ENCODE measurements at regions of chr17 and their contacts with region 1.

Region 1: GRCh38 chr17:7296189-7296902 is 1.9 kb upstream of the YBX2 start:
- DNase-seq: peak; percentile 88 to 96
- ATAC-seq: peak; percentile 92
- H3K4me3 ChIP-seq: no peak overlapping the region
- H3K27ac ChIP-seq: no peak overlapping the region
- H3K4me1 ChIP-seq: no peaks in the 10 kb centered on the region
- H3K27me3 ChIP-seq: peaks cover 0 to 2% of the 10 kb centered on the region in 2 donors

Region 2: GRCh38 chr17:7029659-7030058 is 266.7 kb before region 1 on chr17:
- intact Hi-C with region 1: no loop called
- DNase-seq: no peak
- ATAC-seq: no peak
- H3K4me3 ChIP-seq: no peak overlapping the region
- H3K27ac ChIP-seq: no peak overlapping the region
- H3K4me1 ChIP-seq: no peaks in the 10 kb centered on the region
- H3K27me3 ChIP-seq: no peaks in the 10 kb centered on the region

Region 3: DNA sequence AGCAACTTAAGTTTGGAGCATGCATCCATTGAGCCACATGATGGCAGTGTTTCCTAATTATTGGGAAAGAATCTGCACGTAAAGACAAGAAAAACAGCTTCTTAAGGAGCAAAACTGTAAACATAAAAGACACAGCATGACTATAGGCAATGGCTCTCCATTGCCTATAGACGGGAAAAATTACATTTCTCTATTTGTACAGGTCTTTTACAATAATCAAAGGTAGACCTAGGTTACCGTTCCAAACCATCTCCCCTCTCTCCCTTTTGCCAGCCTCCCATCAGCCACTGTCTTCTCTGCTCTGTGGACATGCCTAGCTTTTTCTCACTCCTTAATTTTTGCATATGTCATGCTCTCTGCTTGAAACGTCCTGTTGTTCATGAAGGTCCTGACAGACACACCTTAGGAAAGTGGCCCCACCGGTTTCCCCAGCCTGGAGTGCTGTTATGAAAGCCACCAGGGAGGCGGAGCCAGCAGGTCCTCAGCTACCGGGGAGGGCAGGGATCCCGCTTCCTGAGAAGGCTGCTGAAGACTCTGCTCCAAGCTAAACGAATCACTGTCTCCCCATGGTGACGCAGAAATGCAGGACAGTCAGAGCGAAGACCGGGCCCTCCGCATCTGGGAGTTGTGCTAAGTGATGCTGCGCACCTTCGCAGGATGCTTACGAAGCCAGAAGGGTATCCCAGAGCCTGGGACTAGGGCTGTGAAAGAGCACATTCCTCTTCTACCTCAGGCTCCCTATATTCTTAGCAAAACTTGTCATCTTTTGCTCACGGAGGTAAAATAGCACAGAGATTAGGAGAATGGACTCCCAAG is 250.2 kb before region 1 on chr17:
- intact Hi-C with region 1: loop called in 1 of 2 experiments (anchors 10 kb)
- DNase-seq: no peak
- ATAC-seq: no peak
- H3K4me3 ChIP-seq: no peak overlapping the region
- H3K27ac ChIP-seq: no peak overlapping the region
- H3K4me1 ChIP-seq: no peaks in the 10 kb centered on the region
- H3K27me3 ChIP-seq: no peaks in the 10 kb centered on the region

Region 4: DNA sequence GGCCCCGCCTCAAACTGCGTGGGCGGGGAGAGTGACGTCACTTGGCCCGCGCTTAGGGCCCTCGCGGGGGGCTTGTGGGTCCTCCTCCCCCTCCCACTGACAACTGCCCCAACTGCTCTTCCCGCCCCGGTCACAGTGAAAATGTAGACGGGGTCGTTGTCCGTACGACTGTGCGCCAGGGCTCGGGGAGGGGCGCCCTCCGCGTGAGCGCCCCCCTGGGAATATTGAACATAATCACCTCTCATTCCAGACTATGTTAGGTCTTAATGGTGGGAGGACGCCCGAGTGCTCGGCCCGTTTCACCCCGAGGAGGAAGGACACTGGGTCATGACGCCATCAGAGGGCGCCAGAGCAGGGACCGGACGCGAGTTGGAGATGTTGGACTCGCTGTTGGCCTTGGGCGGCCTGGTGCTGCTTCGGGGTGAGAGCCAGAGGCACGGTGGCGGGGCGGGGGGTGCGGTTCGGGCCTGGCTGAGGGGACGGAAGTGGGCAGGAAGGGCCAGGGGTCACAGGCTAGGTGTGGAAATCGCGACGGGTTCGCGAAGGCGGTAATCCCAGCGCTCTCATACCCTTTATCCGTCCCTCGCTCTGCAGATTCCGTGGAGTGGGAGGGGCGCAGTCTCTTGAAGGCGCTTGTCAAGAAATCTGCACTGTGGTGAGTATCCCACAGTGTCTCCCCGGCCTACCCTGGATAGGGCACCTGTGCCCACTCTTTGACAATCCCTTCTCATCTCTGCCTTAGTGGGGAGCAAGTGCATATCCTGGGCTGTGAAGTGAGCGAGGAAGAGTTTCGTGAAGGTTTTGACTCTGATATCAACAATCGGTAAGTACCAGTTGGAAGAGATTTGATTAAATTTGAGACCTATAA is 43.9 kb before region 1 on chr17 and contains the start of gene ELP5:
- intact Hi-C with region 1: loop called in 1 of 2 experiments (anchors 5 kb)
- DNase-seq: peak; percentile 97 to 99
- ATAC-seq: peak; percentile 92
- H3K4me3 ChIP-seq: peak within 1 kb of the TSS; percentile 98 to 99
- H3K27ac ChIP-seq: peak within 1 kb of the TSS; percentile 71 to 94
- H3K4me1 ChIP-seq: peaks cover 0 to 2% of the 10 kb centered on the region in 2 donors
- H3K27me3 ChIP-seq: no peaks in the 10 kb centered on the region
- total RNA-seq, gene ELP5: 26.6 to 31.0 TPM

Region 5: DNA sequence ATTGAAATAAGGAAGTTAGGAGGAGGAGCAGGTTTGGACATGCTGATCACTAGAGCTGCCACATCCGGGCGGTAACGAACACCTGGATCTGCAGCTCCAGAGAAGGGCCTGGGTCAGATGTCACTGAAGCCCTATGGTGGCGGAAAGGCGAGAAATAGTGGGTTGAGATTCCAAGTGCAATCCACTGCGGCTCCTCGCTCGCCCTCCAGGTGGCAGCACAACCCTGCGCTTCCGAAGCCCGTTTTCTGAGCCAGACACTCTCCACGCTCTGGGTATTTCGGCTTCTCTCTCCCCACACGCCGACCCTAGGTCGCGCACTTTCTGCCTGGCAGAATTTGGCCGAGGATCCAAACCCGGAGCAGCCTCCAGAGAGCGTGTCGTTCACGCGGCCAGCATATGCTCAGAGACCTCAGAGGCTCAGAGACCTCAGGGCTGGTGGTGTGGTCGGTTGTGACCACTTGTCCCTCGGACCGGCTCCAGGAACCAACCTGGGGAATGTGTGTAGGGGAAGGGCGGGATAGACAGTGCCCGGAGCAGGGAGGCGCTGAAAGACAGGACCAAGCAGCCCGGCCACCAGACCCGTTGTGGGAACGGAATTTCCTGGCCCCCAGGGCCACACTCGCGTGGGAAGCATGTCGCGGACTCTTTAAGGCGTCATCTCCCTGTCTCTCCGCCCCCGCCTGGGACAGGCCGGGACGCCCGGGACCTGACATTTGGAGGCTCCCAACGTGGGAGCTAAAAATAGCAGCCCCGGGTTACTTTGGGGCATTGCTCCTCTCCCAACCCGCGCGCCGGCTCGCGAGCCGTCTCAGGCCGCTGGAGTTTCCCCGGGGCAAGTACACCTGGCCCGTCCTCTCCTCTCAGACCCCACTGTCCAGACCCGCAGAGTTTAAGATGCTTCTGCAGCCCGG is 15.6 kb before region 1 on chr17:
- intact Hi-C with region 1: loop called (anchors 1 kb)
- DNase-seq: peak; percentile 86 to 95
- ATAC-seq: peak; percentile 94
- H3K4me3 ChIP-seq: peak overlapping the region in 1 of 2 donors; percentile 3
- H3K27ac ChIP-seq: peak overlapping the region in 1 of 2 donors; percentile 55
- H3K4me1 ChIP-seq: no peaks in the 10 kb centered on the region
- H3K27me3 ChIP-seq: no peaks in the 10 kb centered on the region

Region 6: DNA sequence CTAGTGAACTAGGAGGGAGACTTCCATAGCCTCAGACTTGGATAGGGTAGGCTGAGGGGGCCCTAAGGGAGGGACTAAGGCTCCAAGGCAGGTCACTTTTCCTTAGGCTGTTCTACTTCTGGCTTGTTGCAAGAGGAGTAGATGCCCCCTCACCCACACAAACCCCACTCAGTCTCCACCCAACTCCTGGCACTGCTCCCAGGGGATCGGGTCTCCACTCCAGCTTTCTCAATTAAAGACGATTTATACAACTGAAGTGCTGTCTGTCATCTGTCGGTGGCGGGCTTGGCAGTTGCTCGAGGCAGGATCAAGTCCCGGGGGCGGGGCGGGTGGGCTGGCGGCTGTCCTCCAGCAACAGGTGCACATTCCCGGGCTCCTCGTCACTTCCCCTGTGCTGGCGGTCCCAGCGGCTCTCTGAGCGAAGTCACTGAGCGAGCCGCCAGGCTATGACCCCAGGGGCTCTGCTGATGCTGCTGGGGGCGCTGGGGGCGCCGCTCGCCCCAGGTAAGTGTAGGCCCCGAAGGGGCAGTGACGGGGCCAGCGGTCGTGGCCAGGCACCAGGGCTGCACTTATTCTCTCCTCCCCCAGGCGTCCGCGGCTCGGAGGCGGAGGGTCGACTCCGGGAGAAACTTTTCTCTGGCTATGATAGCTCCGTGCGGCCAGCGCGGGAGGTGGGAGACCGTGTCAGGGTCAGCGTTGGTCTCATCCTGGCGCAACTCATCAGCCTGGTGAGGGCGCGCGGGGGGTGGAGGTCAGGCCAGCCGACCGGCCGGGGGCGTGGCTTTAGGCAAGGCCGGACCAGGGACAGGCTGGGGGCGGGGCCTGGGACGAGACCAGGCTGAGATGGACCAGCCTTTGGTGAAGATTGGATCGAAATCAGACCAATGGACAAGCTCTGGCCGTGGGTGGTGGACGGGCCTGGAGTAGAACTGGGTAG is 148.6 kb after region 1 on chr17 and contains the start of gene CHRNB1:
- intact Hi-C with region 1: no loop called
- DNase-seq: peak; percentile 87 to 90
- ATAC-seq: peak; percentile 72
- H3K4me3 ChIP-seq: peak within 1 kb of the TSS; percentile 4 to 23
- H3K27ac ChIP-seq: no peak within 1 kb of the TSS
- H3K4me1 ChIP-seq: no peaks in the 10 kb centered on the region
- H3K27me3 ChIP-seq: no peaks in the 10 kb centered on the region
- total RNA-seq, gene CHRNB1: 6.2 to 8.8 TPM

Measured in aorta (tissue), 5 donors.